Activated CD4-positive, alpha-beta memory T cell treated with anti-CD3 and anti-CD28 coated beads for 36 hours (primary cell): ENCODE measurements at regions of chr7 and their contacts with region 1.

Region 1: GRCh38 chr7:74289018-74289658 is at the start of gene CLIP2:
- DNase-seq: peak; percentile 87
- H3K4me3 Mint-ChIP-seq: peak within 1 kb of the TSS; percentile 69
- H3K27ac Mint-ChIP-seq: no peak within 1 kb of the TSS
- H3K4me1 Mint-ChIP-seq: peaks cover 16% of the 10 kb centered on the region
- H3K27me3 Mint-ChIP-seq: peaks cover 14% of the 10 kb centered on the region
- total RNA-seq, gene CLIP2: 2.4 to 2.7 TPM

Region 2: DNA sequence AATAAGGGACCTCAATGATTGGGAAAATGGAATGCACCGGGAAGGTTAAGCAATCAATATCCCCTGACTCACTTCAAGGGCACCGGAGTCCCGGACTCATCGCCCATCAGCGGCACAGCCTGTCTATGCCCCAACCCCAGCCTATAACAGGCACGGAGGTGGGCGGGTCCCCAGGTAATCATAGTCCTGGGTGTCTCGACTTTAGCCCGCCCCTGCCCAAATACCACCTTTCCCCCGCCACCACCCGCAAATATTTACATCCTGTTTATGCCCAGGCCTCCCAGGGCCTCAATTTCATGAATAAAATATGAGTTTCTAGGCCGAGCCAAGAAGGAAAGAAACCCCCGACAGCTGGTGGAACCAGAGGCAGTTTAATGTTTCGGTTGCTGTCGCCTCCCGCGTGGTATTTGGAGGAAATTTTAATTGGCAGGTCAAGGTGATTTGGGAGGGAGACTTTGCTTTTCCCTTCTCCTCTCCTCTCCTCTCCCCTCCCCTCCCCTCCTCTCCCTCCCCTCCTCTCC is 19.3 kb before region 1 on chr7:
- CTCF ChIA-PET with region 1: interaction called, 16 read pairs
- POLR2A ChIA-PET with region 1: interaction called, 4 read pairs
- intact Hi-C with region 1: loop called (anchors 1 kb)
- DNase-seq: peak; percentile 71
- H3K4me3 Mint-ChIP-seq: peak overlapping the region; percentile 74
- H3K27ac Mint-ChIP-seq: no peak overlapping the region
- H3K4me1 Mint-ChIP-seq: peaks cover 10% of the 10 kb centered on the region
- H3K27me3 Mint-ChIP-seq: peaks cover 7% of the 10 kb centered on the region

Region 3: GRCh38 chr7:74275401-74275881 is 13.7 kb before region 1 on chr7:
- CTCF ChIA-PET with region 1: interaction called, 16 read pairs
- POLR2A ChIA-PET with region 1: interaction called, 4 read pairs
- intact Hi-C with region 1: loop called (anchors 1 kb)
- DNase-seq: no peak
- H3K4me3 Mint-ChIP-seq: no peak overlapping the region
- H3K27ac Mint-ChIP-seq: no peak overlapping the region
- H3K4me1 Mint-ChIP-seq: peaks cover 18% of the 10 kb centered on the region
- H3K27me3 Mint-ChIP-seq: peaks cover 7% of the 10 kb centered on the region